ENCODE measurements at regions of chr20 and their contacts with region 1.

Region 1: DNA sequence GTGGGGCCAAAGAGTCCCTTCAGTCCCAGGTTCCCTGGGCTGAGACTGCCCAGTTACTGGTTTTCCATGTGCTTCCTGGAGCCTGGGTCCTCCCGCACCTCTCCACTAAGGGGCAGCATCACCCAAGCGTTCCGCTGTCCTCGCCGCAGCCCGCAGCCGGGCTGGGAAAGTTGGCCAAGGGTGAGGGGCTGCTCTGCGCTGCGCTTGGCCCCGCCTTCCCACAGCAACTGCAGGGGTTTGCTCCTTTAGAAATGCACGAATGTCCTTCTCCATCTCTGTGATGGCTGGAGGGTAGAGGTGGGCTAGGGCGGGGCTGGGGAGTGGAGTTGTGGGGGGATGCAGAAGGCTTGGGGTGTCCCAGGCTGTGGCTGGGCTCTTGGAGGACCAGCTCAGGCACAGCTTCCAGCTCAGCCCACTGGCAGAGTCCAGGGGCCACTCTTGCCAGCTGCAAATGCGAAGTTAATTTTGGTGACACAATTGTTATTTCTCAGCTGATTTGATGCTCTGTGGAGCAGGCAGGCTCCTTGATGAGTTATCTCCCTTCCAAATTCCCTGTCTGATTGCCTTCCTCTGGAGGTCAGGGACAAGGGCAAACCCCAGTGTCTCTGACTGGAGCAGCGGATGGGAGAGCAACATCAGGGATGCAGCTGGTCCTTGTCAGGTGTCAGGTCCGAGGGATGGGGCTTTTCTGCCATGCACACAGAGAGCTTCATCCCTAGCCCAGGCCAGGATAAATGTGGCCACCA is 63.2 kb downstream of the NOL4L start:
- DNase-seq: peak; percentile 49
- ATAC-seq: peak; percentile 94
- H3K4me3 ChIP-seq: no peak overlapping the region
- H3K27ac ChIP-seq: no peak overlapping the region
- H3K4me1 ChIP-seq: peaks cover 4% of the 10 kb centered on the region; the same call in 1 of the 2 replicates
- H3K27me3 ChIP-seq: peaks cover 4% of the 10 kb centered on the region; the same call in 1 of the 2 replicates
- CTCF ChIP-seq: peak; percentile 95
- POLR2A ChIP-seq: peak; percentile 58
- RAD21 ChIP-seq: peak; percentile 100

Region 2: GRCh38 chr20:32098786-32099185 is 423.2 kb before region 1 on chr20:
- CTCF ChIA-PET with region 1: no interaction called
- POLR2A ChIA-PET with region 1: no interaction called
- dilution Hi-C with region 1: no loop called
- in situ Hi-C with region 1: no loop called
- intact Hi-C with region 1: no loop called
- DNase-seq: no peak
- ATAC-seq: no peak
- H3K4me3 ChIP-seq: no peak overlapping the region
- H3K27ac ChIP-seq: no peak overlapping the region
- H3K4me1 ChIP-seq: no peaks in the 10 kb centered on the region
- H3K27me3 ChIP-seq: peaks cover 42% of the 10 kb centered on the region
- CTCF ChIP-seq: no peak
- POLR2A ChIP-seq: no peak
- RAD21 ChIP-seq: no peak

Region 3: DNA sequence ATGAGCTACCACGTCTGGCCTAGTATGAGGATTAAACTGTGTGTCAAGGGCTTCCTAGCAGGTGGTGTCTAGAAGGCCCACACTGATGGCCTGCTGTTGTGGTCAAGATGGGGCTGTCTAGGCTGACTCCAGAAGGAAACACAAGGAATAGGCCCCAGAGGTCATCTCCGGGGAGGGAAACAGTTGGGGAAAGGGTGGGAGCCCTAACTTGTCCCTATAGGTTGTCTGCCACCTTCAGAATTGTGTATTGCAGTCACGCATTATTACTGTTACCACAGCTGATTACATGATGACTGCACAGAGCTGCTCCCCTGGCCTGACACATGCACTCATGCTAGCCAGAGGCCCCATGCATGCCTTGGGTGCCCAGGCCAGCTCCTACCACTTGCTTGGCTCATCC is 124.5 kb after region 1 on chr20:
- CTCF ChIA-PET with region 1: interaction called, 28 read pairs
- POLR2A ChIA-PET with region 1: interaction called, 17 read pairs
- dilution Hi-C with region 1: no loop called
- in situ Hi-C with region 1: loop called (anchors 5 kb)
- intact Hi-C with region 1: no loop called
- DNase-seq: no peak
- ATAC-seq: no peak
- H3K4me3 ChIP-seq: no peak overlapping the region
- H3K27ac ChIP-seq: no peak overlapping the region
- H3K4me1 ChIP-seq: no peaks in the 10 kb centered on the region
- H3K27me3 ChIP-seq: peaks cover 32% of the 10 kb centered on the region
- CTCF ChIP-seq: no peak
- POLR2A ChIP-seq: no peak
- RAD21 ChIP-seq: no peak